Aorta (tissue), 5 donors: ENCODE measurements at regions of chr18 and their contacts with region 1.

Region 1: GRCh38 chr18:10519999-10520935 is 5.6 kb upstream of the NAPG start:
- DNase-seq: peak; percentile 89 to 92
- ATAC-seq: peak; percentile 86
- H3K4me3 ChIP-seq: no peak overlapping the region
- H3K27ac ChIP-seq: no peak overlapping the region
- H3K4me1 ChIP-seq: peaks cover 0 to 4% of the 10 kb centered on the region in 2 donors
- H3K27me3 ChIP-seq: no peaks in the 10 kb centered on the region

Region 2: GRCh38 chr18:9971313-9971920 is 548.9 kb before region 1 on chr18:
- intact Hi-C with region 1: loop called (anchors 2 kb)
- DNase-seq: peak in 1 of 2 donors; percentile 68
- ATAC-seq: peak; percentile 85
- H3K4me3 ChIP-seq: no peak overlapping the region
- H3K27ac ChIP-seq: no peak overlapping the region
- H3K4me1 ChIP-seq: no peaks in the 10 kb centered on the region
- H3K27me3 ChIP-seq: no peaks in the 10 kb centered on the region

Region 3: GRCh38 chr18:10006311-10006893 is 513.9 kb before region 1 on chr18:
- intact Hi-C with region 1: loop called (anchors 1 to 10 kb)
- DNase-seq: no peak
- ATAC-seq: no peak
- H3K4me3 ChIP-seq: no peak overlapping the region
- H3K27ac ChIP-seq: no peak overlapping the region
- H3K4me1 ChIP-seq: peaks cover 3 to 4% of the 10 kb centered on the region in 2 donors
- H3K27me3 ChIP-seq: no peaks in the 10 kb centered on the region

Region 4: DNA sequence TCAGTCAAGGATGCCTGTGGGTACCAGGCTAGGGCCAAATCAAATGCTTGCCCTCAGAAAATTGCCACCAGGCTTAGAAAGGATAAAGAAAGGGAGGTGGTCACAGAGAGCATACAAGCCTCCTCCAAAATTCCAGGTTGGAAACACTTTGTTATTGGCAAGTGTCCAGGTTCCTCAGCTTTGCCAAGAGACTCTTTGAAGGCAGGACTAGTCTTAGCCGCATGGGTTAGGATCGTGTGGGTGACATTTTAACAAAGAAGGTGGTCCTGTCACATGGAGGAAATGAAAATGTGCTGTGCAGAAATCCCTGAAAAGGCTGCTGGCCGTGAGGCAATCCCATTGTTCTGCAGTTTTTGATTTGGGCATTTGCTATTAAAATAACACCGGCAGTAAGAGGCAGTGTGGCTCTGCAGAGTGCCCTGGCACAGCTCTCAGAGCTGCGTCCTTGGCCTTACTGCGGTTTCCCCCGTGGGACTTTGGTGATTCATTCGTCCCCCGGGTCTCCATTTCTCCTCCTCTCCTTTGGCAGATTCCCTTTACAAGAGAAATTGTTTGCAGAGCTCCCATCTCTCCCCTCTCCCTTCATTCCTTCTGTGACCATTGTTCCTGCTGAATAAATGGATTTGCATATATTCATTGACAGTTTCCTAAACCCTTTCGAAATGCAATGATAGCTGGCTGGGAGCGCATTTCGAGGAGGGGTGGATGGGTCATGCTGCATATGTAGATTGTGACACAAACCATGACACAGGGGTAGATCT is 419.1 kb before region 1 on chr18:
- intact Hi-C with region 1: loop called in 1 of 2 experiments (anchors 10 kb)
- DNase-seq: peak; percentile 76 to 85
- ATAC-seq: peak; percentile 85
- H3K4me3 ChIP-seq: peak overlapping the region in 1 of 2 donors; percentile 4
- H3K27ac ChIP-seq: no peak overlapping the region
- H3K4me1 ChIP-seq: peaks cover 0 to 8% of the 10 kb centered on the region in 2 donors
- H3K27me3 ChIP-seq: no peaks in the 10 kb centered on the region

Region 5: DNA sequence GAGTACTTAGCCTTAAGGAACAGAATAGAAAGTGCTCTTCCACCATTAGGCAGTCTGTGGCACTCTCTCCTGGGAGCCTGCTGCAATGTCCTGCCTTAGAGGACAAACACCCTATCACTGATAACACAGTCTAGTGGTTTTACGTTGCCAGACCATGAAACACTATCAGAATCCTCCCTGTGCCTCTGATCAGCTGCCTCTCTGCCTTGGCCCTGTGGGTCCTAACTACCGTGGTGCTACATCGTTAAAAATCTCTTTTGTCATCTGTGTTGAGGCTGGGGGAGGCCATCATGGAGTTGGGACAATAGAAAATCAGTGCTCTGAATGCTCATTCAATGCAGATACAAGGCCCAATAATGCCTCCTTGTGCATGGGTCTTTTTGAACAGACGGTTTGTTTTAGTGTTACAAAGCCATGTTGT is 77.7 kb before region 1 on chr18:
- intact Hi-C with region 1: no loop called
- DNase-seq: no peak
- ATAC-seq: no peak
- H3K4me3 ChIP-seq: no peak overlapping the region
- H3K27ac ChIP-seq: no peak overlapping the region
- H3K4me1 ChIP-seq: no peaks in the 10 kb centered on the region
- H3K27me3 ChIP-seq: no peaks in the 10 kb centered on the region

Region 6: GRCh38 chr18:10453806-10454673 is 66.2 kb before region 1 on chr18 and contains the start of gene APCDD1:
- intact Hi-C with region 1: loop called (anchors 5 kb)
- DNase-seq: peak; percentile 76 to 86
- ATAC-seq: peak; percentile 93
- H3K4me3 ChIP-seq: peak within 1 kb of the TSS; percentile 56 to 70
- H3K27ac ChIP-seq: peak within 1 kb of the TSS in 1 of 2 donors; percentile 26
- H3K4me1 ChIP-seq: no peaks in the 10 kb centered on the region
- H3K27me3 ChIP-seq: no peaks in the 10 kb centered on the region
- total RNA-seq, gene APCDD1: 7.6 to 10.9 TPM